HEK293T (cell line): ENCODE measurements at regions of chr6 and their contacts with region 1.

Region 1: GRCh38 chr6:33568826-33569570 is 11.1 kb downstream of the BAK1 start:
- DNase-seq: no peak

Region 2: GRCh38 chr6:33467091-33467490 is 101.9 kb before region 1 on chr6:
- CTCF ChIA-PET with region 1: interaction called, 11 read pairs
- POLR2A ChIA-PET with region 1: no interaction called
- DNase-seq: no peak

Region 3: DNA sequence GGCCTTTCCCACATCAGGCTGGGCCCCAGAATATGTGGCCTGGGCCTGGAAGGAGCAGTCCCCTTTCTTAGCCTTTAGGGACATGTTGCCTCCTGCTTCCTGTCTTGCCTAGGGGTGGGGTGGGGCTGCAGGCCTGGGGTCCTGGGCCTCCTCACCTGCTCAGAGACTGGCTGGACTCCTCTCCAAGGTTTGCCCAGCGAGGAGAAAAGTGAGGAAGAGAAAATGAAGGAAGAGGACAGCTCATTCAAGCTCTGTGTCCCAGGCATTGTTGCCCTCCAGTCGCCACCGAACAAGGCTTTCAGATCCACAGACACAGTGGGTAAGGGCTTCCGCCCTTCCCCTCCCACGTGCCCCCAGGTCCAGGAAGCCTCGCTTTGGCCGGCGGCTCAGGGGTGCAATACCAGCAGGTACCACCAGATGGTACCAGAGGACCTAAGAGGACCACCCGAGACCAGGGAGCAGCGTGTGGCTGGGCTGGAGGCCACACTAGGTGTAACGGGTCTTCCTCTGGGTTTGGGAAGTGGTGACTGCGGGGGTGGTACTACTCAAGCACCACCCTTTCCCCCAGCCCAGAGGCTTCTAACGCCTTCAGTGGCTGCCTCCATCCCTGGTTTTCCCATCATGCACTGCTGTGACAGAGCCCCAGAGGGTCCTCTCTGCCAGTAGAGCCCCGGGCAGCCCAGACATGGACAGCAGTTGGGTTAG is 16.6 kb after region 1 on chr6:
- CTCF ChIA-PET with region 1: no interaction called
- POLR2A ChIA-PET with region 1: no interaction called
- DNase-seq: peak; percentile 84